ENCODE measurements at regions of chr5 and their contacts with region 1.

Region 1: GRCh38 chr5:34587355-34588241 is 68.5 kb upstream of the RAI14 start:
- DNase-seq: no peak
- H3K4me3 Mint-ChIP-seq: no peak overlapping the region
- H3K27ac Mint-ChIP-seq: peak overlapping the region; percentile 55
- H3K4me1 Mint-ChIP-seq: peaks cover 40% of the 10 kb centered on the region
- H3K27me3 Mint-ChIP-seq: no peaks in the 10 kb centered on the region
- CTCF ChIP-seq: no peak

Region 2: GRCh38 chr5:34555699-34556508 is 31.7 kb before region 1 on chr5:
- CTCF ChIA-PET with region 1: interaction called, 3 read pairs
- intact Hi-C with region 1: loop called (anchors 1 kb)
- DNase-seq: peak; percentile 13
- H3K4me3 Mint-ChIP-seq: no peak overlapping the region
- H3K27ac Mint-ChIP-seq: no peak overlapping the region
- H3K4me1 Mint-ChIP-seq: peaks cover 18% of the 10 kb centered on the region
- H3K27me3 Mint-ChIP-seq: no peaks in the 10 kb centered on the region
- CTCF ChIP-seq: no peak

Region 3: GRCh38 chr5:34608859-34609648 is 21.5 kb after region 1 on chr5:
- CTCF ChIA-PET with region 1: interaction called, 5 read pairs
- intact Hi-C with region 1: loop called (anchors 2 kb)
- DNase-seq: no peak
- H3K4me3 Mint-ChIP-seq: peak overlapping the region; percentile 37
- H3K27ac Mint-ChIP-seq: peak overlapping the region; percentile 95
- H3K4me1 Mint-ChIP-seq: peaks cover 32% of the 10 kb centered on the region
- H3K27me3 Mint-ChIP-seq: no peaks in the 10 kb centered on the region
- CTCF ChIP-seq: no peak

Region 4: GRCh38 chr5:34656001-34656699 is 68.6 kb after region 1 on chr5 and contains the start of gene RAI14:
- CTCF ChIA-PET with region 1: interaction called, 4 read pairs
- intact Hi-C with region 1: loop called (anchors 5 kb)
- DNase-seq: peak; percentile 88
- H3K4me3 Mint-ChIP-seq: peak within 1 kb of the TSS; percentile 60
- H3K27ac Mint-ChIP-seq: peak within 1 kb of the TSS; percentile 54
- H3K4me1 Mint-ChIP-seq: peaks cover 27% of the 10 kb centered on the region
- H3K27me3 Mint-ChIP-seq: no peaks in the 10 kb centered on the region
- CTCF ChIP-seq: no peak
- total RNA-seq, gene RAI14: 56.2 and 84.3 TPM in 2 replicates

Measured in Calu3 (cell line).